ENCODE measurements at regions of chr3 and their contacts with region 1.

Region 1: GRCh38 chr3:117355566-117355965 is 646.0 kb downstream of the TUSC7 start:
- DNase-seq: peak; percentile 22
- ATAC-seq: peak; percentile 53; the same call in 1 of the 2 replicates
- H3K4me3 ChIP-seq: no peak overlapping the region
- H3K27ac ChIP-seq: no peak overlapping the region
- H3K4me1 ChIP-seq: no peaks in the 10 kb centered on the region
- H3K27me3 ChIP-seq: no peaks in the 10 kb centered on the region
- CTCF ChIP-seq: peak; percentile 44; the same call in 1 of the 2 replicates
- POLR2A ChIP-seq: no peak
- RAD21 ChIP-seq: peak; percentile 62

Region 2: GRCh38 chr3:117059067-117059955 is 296.3 kb before region 1 on chr3:
- CTCF ChIA-PET with region 1: no interaction called
- POLR2A ChIA-PET with region 1: no interaction called
- dilution Hi-C with region 1: no loop called
- in situ Hi-C with region 1: no loop called
- intact Hi-C with region 1: loop called (anchors 1 kb)
- DNase-seq: peak; percentile 46
- ATAC-seq: no peak
- H3K4me3 ChIP-seq: no peak overlapping the region
- H3K27ac ChIP-seq: no peak overlapping the region
- H3K4me1 ChIP-seq: peaks cover 3% of the 10 kb centered on the region; the same call in 1 of the 2 replicates
- H3K27me3 ChIP-seq: no peaks in the 10 kb centered on the region
- CTCF ChIP-seq: peak; percentile 62
- POLR2A ChIP-seq: no peak
- RAD21 ChIP-seq: peak; percentile 50

Region 3: GRCh38 chr3:117553461-117553860 is 197.9 kb after region 1 on chr3:
- CTCF ChIA-PET with region 1: no interaction called
- POLR2A ChIA-PET with region 1: no interaction called
- dilution Hi-C with region 1: no loop called
- in situ Hi-C with region 1: no loop called
- intact Hi-C with region 1: no loop called
- DNase-seq: peak; percentile 72
- ATAC-seq: peak; percentile 59; the same call in 1 of the 2 replicates
- H3K4me3 ChIP-seq: no peak overlapping the region
- H3K27ac ChIP-seq: no peak overlapping the region
- H3K4me1 ChIP-seq: peaks cover 7% of the 10 kb centered on the region
- H3K27me3 ChIP-seq: no peaks in the 10 kb centered on the region
- CTCF ChIP-seq: no peak
- POLR2A ChIP-seq: no peak
- RAD21 ChIP-seq: no peak